H1 (cell line): ENCODE measurements at regions of chr1 and their contacts with region 1.

Region 1: DNA sequence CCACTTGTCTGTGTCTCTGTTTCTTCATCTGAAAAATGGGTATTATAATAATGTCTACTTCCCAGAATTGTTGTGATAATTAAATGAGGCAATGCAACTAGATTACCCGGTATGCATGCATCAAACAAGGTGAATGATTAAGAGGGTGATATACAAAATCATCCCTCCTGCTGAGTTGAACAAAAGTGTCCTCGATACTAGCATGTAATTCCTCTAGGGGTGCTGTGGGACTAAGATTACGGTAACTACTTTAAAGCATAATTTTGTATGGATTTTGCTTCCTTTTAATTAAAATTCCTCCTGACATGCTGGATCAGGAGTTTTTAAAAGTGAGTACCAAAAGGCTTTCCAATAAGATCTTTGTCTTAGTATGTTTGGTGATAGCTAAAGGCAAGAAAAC is 98.7 kb upstream of the PRMT6 start:
- DNase-seq: no peak
- H3K4me3 ChIP-seq: no peak overlapping the region
- H3K27ac ChIP-seq: no peak overlapping the region
- H3K4me1 ChIP-seq: peaks cover 0 to 7% (median 3%) of the 10 kb centered on the region in 4 experiments; a peak in 2 of 7 replicates
- H3K27me3 ChIP-seq: no peaks in the 10 kb centered on the region
- CTCF ChIP-seq: peak in 1 of 3 experiments; percentile 38; a peak in 1 of 4 replicates
- EP300 ChIP-seq: no peak
- POLR2A ChIP-seq: no peak
- RAD21 ChIP-seq: peak; percentile 30 to 42

Region 2: DNA sequence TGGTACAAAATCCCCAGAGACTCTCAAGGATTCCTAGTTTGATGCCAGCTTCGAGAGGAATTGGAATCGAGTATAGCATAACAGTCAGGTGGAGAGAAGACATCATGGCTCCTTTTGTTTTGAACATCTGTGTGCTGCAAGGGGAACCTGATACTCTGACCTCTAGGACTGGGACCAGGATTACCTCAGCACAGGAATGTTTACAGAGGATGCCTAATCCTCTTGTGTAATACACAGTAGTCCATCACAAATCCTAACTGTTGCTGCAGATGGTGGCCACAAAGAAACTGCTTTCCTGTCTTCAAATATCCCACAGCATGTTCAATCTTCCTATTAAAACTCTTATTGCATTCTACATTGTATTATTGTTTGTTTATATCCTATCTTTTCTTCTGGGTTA is 13.1 kb before region 1 on chr1:
- CTCF ChIA-PET with region 1: interaction called, 11 read pairs
- POLR2A ChIA-PET with region 1: no interaction called
- DNase-seq: no peak
- H3K4me3 ChIP-seq: no peak overlapping the region
- H3K27ac ChIP-seq: no peak overlapping the region
- H3K4me1 ChIP-seq: no peaks in the 10 kb centered on the region
- H3K27me3 ChIP-seq: no peaks in the 10 kb centered on the region
- CTCF ChIP-seq: no peak
- EP300 ChIP-seq: no peak
- POLR2A ChIP-seq: no peak
- RAD21 ChIP-seq: no peak